ENCODE measurements at regions of chr9 and their contacts with region 1.

Region 1: DNA sequence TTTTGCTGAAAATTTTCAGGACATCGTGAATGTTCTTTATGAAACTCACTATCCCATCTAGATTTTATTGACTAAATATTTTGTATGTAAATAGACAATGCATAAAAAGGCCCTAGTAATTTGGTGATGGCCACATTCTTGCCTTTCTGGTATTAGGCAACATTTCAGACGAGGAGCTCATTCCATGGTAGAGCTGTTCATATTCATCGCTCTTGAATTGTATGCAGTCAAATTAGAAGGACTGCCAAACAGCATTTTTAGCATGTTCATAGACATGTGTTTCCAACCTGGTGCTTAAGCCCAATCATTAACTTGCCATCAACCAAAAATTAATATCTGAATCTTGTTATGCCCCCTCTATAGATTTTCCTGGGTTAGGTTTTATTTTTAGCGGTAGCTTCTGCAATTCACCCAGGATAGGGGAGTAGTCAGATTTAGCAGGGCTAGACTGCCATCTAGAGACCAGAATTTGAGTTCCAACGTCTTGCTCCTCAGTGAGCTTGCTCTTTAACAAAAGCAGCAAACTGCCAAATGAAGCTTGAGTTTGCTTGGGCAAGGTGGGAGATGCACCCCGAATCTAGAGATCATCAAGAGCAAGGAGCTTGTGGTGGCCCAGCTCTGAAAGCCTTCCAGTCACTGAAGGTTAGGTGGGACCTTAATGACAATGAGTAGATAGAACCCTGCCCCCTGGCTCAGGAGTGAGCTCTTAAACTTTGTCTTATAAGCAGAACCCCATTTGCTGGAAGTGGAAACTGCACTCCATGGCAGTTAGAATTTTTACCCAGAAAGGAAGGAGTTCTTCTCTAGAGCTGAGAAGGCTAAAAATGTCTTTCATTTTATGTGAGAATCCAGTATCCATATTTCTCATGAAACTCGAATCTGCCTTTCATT is 456.2 kb downstream of the RASEF start:
- DNase-seq: peak; percentile 35
- H3K4me3 ChIP-seq: no peak overlapping the region
- H3K27ac ChIP-seq: no peak overlapping the region
- H3K4me1 ChIP-seq: no peaks in the 10 kb centered on the region
- H3K27me3 ChIP-seq: no peaks in the 10 kb centered on the region
- CTCF ChIP-seq: peak; percentile 52 to 66

Region 2: GRCh38 chr9:81848472-81848871 is 758.3 kb before region 1 on chr9:
- CTCF ChIA-PET with region 1: no interaction called
- dilution Hi-C with region 1: no loop called
- in situ Hi-C with region 1: no loop called
- intact Hi-C with region 1: no loop called
- DNase-seq: peak; percentile 32
- H3K4me3 ChIP-seq: no peak overlapping the region
- H3K27ac ChIP-seq: no peak overlapping the region
- H3K4me1 ChIP-seq: no peaks in the 10 kb centered on the region
- H3K27me3 ChIP-seq: no peaks in the 10 kb centered on the region
- CTCF ChIP-seq: peak; percentile 31 to 53

Region 3: GRCh38 chr9:82961504-82962125 is 354.9 kb after region 1 on chr9:
- CTCF ChIA-PET with region 1: no interaction called
- dilution Hi-C with region 1: no loop called
- in situ Hi-C with region 1: no loop called
- intact Hi-C with region 1: loop called (anchors 1 kb)
- DNase-seq: peak; percentile 68
- H3K4me3 ChIP-seq: no peak overlapping the region
- H3K27ac ChIP-seq: no peak overlapping the region
- H3K4me1 ChIP-seq: no peaks in the 10 kb centered on the region
- H3K27me3 ChIP-seq: no peaks in the 10 kb centered on the region
- CTCF ChIP-seq: peak; percentile 74 to 91

Measured in mammary epithelial cell (primary cell).